Naive thymus-derived CD8-positive, alpha-beta T cell (primary cell): ENCODE measurements at regions of chr1 and their contacts with region 1.

Region 1: DNA sequence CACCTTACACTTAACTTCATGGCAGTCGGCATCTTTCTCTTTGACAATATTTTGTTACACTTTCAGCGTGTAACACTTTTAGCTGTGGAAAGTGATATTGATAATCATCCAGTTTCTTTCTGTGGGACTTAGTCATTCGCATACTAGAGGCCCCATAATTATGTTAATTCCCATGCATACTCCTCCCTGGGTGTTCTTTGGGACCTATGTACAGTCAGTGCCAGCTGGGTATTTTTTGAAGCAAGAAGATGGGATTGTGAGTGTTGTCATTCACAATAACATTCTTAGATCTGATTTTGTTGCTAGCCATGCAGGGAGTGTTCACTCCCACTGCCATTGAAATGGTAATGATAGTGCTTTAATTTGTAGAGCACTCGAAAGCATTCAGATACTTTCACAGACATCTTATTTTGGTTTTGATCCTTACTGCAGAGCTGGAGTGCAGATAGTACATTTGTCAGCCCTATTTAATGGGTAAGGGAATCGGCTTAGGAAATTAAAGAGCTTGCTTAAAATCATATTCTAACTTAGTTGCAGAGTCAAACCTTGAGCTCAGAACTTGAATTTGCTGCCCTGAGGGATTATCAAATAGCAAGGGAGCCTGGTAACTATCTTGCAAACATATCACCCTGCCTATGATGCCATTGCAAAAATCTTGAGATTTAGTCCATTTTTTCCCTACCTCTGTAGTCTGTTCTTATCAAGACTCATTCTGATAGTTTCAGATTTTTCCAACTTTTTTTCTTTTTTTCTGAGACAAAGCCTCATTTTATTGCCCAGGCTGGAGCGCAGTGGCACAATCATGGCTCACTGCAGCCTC is 11.8 kb downstream of the SARS1 start:
- DNase-seq: no peak
- ATAC-seq: no peak
- H3K4me3 Mint-ChIP-seq: no peak overlapping the region
- H3K27ac Mint-ChIP-seq: peak overlapping the region in 4 of 10 donors; percentile 11 to 43 (median 26)
- H3K4me1 Mint-ChIP-seq: peaks cover 10 to 41% (median 31%) of the 10 kb centered on the region in 4 donors
- H3K27me3 Mint-ChIP-seq: no peaks in the 10 kb centered on the region

Region 2: GRCh38 chr1:109213785-109214468 is 11.5 kb before region 1 on chr1 and contains the start of gene SARS1:
- POLR2A ChIA-PET with region 1: interaction called, 12 read pairs
- DNase-seq: peak; percentile 73 to 94 (median 88)
- ATAC-seq: peak; percentile 89
- H3K4me3 Mint-ChIP-seq: peak within 1 kb of the TSS; percentile 93 to 100 (median 99)
- H3K27ac Mint-ChIP-seq: peak within 1 kb of the TSS; percentile 92 to 99 (median 97)
- H3K4me1 Mint-ChIP-seq: peaks cover 24 to 44% (median 38%) of the 10 kb centered on the region in 4 donors
- H3K27me3 Mint-ChIP-seq: peaks cover 0 to 3% (median 0%) of the 10 kb centered on the region in 5 donors
- polyA plus RNA-seq, gene SARS1: 117 to 154 (median 127) TPM

Region 3: GRCh38 chr1:109762821-109763645 is 537.6 kb after region 1 on chr1:
- POLR2A ChIA-PET with region 1: no interaction called
- DNase-seq: peak in 2 of 10 donors; percentile 14 to 19
- ATAC-seq: no peak
- H3K4me3 Mint-ChIP-seq: no peak overlapping the region
- H3K27ac Mint-ChIP-seq: no peak overlapping the region
- H3K4me1 Mint-ChIP-seq: peaks cover 0 to 2% (median 0%) of the 10 kb centered on the region in 4 donors
- H3K27me3 Mint-ChIP-seq: peaks cover 0 to 3% (median 0%) of the 10 kb centered on the region in 5 donors